HCT116 (cell line): ENCODE measurements at regions of chr2 and their contacts with region 1.

Region 1: GRCh38 chr2:146094185-146094584 is 1574.3 kb upstream of the ZEB2 start:
- DNase-seq: no peak
- ATAC-seq: no peak
- H3K4me3 ChIP-seq: no peak overlapping the region
- H3K27ac ChIP-seq: no peak overlapping the region
- H3K4me1 ChIP-seq: no peaks in the 10 kb centered on the region
- H3K27me3 ChIP-seq: no peaks in the 10 kb centered on the region
- CTCF ChIP-seq: no peak
- POLR2A ChIP-seq: no peak
- RAD21 ChIP-seq: no peak

Region 2: GRCh38 chr2:146124741-146125140 is 30.6 kb after region 1 on chr2:
- CTCF ChIA-PET with region 1: no interaction called
- POLR2A ChIA-PET with region 1: no interaction called
- RAD21 ChIA-PET with region 1: no interaction called
- intact Hi-C with region 1: loop called (anchors 5 kb)
- DNase-seq: no peak
- ATAC-seq: no peak
- H3K4me3 ChIP-seq: no peak overlapping the region
- H3K27ac ChIP-seq: no peak overlapping the region
- H3K4me1 ChIP-seq: no peaks in the 10 kb centered on the region
- H3K27me3 ChIP-seq: no peaks in the 10 kb centered on the region
- CTCF ChIP-seq: no peak
- POLR2A ChIP-seq: no peak
- RAD21 ChIP-seq: no peak